CD8-positive, alpha-beta T cell (primary cell): ENCODE measurements at regions of chr1 and their contacts with region 1.

Region 1: DNA sequence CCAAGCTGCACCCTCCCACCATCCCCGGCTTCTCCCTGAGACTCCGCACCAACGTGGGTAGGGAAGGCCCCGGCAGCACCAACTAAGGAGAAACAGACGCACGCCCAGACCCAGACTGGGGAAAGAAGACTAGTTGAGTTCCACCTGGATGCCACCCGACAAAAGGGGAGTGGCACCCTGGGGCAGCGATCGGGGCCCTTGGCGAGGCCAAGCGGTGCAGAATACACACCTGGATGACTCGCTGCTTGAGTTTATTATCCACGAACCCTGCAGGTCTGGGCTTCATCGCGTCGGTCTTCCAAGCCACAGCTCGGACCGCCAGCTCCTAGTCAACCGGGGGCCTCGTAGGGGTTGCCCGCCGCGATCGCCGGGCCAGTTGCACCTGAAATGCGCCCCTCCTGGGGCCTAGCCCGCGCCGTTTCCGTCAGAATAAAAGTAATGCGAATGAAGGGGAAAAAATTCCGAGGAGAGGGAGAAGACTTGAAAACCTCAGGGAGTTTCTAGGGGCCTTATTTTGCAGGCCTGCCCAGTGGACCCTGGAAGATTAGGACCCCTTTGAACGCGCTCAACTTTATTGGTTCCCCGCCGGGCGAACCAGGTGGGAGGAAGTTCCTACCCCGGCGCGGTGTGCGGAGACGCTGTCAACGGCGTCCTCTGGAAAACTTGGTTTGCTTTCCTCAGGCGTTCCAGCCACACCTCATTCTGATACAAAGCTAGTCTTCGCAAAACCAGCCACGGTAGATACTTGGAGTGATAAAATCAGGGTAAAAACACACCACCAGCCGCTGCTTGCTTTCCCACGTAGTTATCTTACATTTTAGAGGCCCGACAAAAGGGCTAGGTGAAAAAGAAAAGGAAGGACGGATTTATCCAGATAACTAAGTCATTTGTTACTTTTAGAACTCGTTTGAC is at the start of gene NVL:
- DNase-seq: peak; percentile 62 to 91 (median 79)
- ATAC-seq: peak; percentile 89
- H3K4me3 ChIP-seq: peak within 1 kb of the TSS; percentile 99
- H3K4me3 Mint-ChIP-seq: peak within 1 kb of the TSS; percentile 94
- H3K27ac ChIP-seq: peak within 1 kb of the TSS; percentile 77 to 98
- H3K27ac Mint-ChIP-seq: peak within 1 kb of the TSS; percentile 100
- H3K4me1 ChIP-seq: peaks cover 22% of the 10 kb centered on the region
- H3K4me1 Mint-ChIP-seq: peaks cover 50% of the 10 kb centered on the region
- H3K27me3 ChIP-seq: no peaks in the 10 kb centered on the region
- H3K27me3 Mint-ChIP-seq: no peaks in the 10 kb centered on the region
- CTCF ChIP-seq: no peak
- total RNA-seq, gene NVL: 11.1 to 16.6 TPM

Region 2: GRCh38 chr1:223695941-223696340 is 634.2 kb before region 1 on chr1:
- CTCF ChIA-PET with region 1: no interaction called
- POLR2A ChIA-PET with region 1: no interaction called
- intact Hi-C with region 1: loop called (anchors 2 to 5 kb)
- DNase-seq: no peak
- ATAC-seq: no peak
- H3K4me3 ChIP-seq: no peak overlapping the region
- H3K4me3 Mint-ChIP-seq: no peak overlapping the region
- H3K27ac ChIP-seq: no peak overlapping the region
- H3K27ac Mint-ChIP-seq: no peak overlapping the region
- H3K4me1 ChIP-seq: peaks cover 7% of the 10 kb centered on the region
- H3K4me1 Mint-ChIP-seq: peaks cover 6% of the 10 kb centered on the region
- H3K27me3 ChIP-seq: no peaks in the 10 kb centered on the region
- H3K27me3 Mint-ChIP-seq: no peaks in the 10 kb centered on the region
- CTCF ChIP-seq: no peak

Region 3: GRCh38 chr1:223748773-223749733 is 581.0 kb before region 1 on chr1:
- CTCF ChIA-PET with region 1: no interaction called
- POLR2A ChIA-PET with region 1: no interaction called
- intact Hi-C with region 1: loop called in 1 of 2 experiments (anchors 1 kb)
- DNase-seq: peak; percentile 46 to 83 (median 66)
- ATAC-seq: peak; percentile 91
- H3K4me3 ChIP-seq: peak overlapping the region; percentile 55 to 58
- H3K4me3 Mint-ChIP-seq: peak overlapping the region; percentile 86
- H3K27ac ChIP-seq: peak overlapping the region in 1 of 2 experiments; percentile 36
- H3K27ac Mint-ChIP-seq: no peak overlapping the region
- H3K4me1 ChIP-seq: peaks cover 4% of the 10 kb centered on the region
- H3K4me1 Mint-ChIP-seq: no peaks in the 10 kb centered on the region
- H3K27me3 ChIP-seq: no peaks in the 10 kb centered on the region
- H3K27me3 Mint-ChIP-seq: no peaks in the 10 kb centered on the region
- CTCF ChIP-seq: peak; percentile 88

Region 4: DNA sequence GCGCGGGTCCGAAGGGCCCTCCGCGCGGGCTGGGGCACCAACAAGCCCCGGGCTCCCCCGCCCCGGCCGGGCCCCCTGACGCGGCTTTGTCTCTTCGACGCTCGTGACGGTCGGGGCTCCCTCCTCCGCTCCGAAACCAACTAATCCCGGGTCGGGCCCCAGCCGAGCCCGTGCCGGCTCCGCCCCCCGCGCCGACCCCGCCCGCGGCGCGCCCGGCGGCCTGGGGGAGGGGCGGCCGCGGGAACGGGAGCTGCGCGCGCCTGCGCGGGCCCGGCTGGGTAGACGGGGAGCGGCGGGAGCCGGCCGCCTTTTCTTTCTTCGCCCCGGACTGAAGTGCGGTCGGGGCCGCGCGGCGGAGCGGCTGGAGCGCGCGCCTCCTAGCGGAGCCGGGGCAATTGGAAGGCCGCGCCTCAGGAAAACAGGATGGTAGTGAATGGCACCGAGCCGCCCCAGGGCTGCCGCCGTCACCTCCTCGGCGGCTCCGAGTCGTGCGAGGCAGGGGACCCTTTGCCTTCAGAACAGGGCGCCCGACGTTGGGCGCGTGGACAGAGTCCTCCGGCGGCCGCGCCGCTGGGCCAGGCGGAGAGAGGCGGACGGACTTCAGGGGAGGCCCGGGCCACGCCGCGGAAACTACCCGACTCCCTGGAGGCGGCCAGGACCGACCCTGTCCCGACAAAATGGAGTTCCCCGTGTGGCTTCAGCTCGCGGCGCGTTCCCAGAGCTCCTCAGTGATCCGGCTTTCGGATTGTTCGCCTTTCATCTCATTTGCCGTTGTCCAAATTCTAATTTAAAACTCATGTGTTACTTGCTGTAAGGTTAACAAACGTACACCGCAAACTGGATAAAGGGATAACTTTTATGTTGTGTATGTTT is 484.1 kb before region 1 on chr1 and contains the start of gene TP53BP2:
- CTCF ChIA-PET with region 1: no interaction called
- POLR2A ChIA-PET with region 1: no interaction called
- intact Hi-C with region 1: loop called in 1 of 2 experiments (anchors 5 kb)
- DNase-seq: peak; percentile 66 to 93 (median 86)
- ATAC-seq: peak; percentile 83
- H3K4me3 ChIP-seq: peak within 1 kb of the TSS; percentile 77 to 87
- H3K4me3 Mint-ChIP-seq: peak within 1 kb of the TSS; percentile 93
- H3K27ac ChIP-seq: peak within 1 kb of the TSS; percentile 87 to 92
- H3K27ac Mint-ChIP-seq: peak within 1 kb of the TSS; percentile 95
- H3K4me1 ChIP-seq: peaks cover 28% of the 10 kb centered on the region
- H3K4me1 Mint-ChIP-seq: peaks cover 29% of the 10 kb centered on the region
- H3K27me3 ChIP-seq: no peaks in the 10 kb centered on the region
- H3K27me3 Mint-ChIP-seq: no peaks in the 10 kb centered on the region
- CTCF ChIP-seq: peak; percentile 33
- total RNA-seq, gene TP53BP2: 96.1 to 98.3 TPM

Region 5: GRCh38 chr1:224168859-224169380 is 161.2 kb before region 1 on chr1:
- CTCF ChIA-PET with region 1: interaction called, 6 read pairs
- POLR2A ChIA-PET with region 1: no interaction called
- intact Hi-C with region 1: loop called in 1 of 2 experiments (anchors 1 kb)
- DNase-seq: peak in 5 of 9 experiments; percentile 9 to 84 (median 25)
- ATAC-seq: peak; percentile 86
- H3K4me3 ChIP-seq: no peak overlapping the region
- H3K4me3 Mint-ChIP-seq: peak overlapping the region; percentile 33
- H3K27ac ChIP-seq: no peak overlapping the region
- H3K27ac Mint-ChIP-seq: peak overlapping the region; percentile 49
- H3K4me1 ChIP-seq: peaks cover 29% of the 10 kb centered on the region
- H3K4me1 Mint-ChIP-seq: peaks cover 31% of the 10 kb centered on the region
- H3K27me3 ChIP-seq: no peaks in the 10 kb centered on the region
- H3K27me3 Mint-ChIP-seq: no peaks in the 10 kb centered on the region
- CTCF ChIP-seq: no peak

Region 6: GRCh38 chr1:224356685-224357625 is 26.9 kb after region 1 on chr1 and contains the start of gene CNIH4:
- CTCF ChIA-PET with region 1: interaction called, 10 read pairs
- POLR2A ChIA-PET with region 1: no interaction called
- intact Hi-C with region 1: loop called (anchors 1 kb)
- DNase-seq: peak; percentile 81 to 97 (median 90)
- ATAC-seq: peak; percentile 99
- H3K4me3 ChIP-seq: peak within 1 kb of the TSS; percentile 60 to 78
- H3K4me3 Mint-ChIP-seq: peak within 1 kb of the TSS; percentile 87
- H3K27ac ChIP-seq: peak within 1 kb of the TSS; percentile 63 to 74
- H3K27ac Mint-ChIP-seq: peak within 1 kb of the TSS; percentile 92
- H3K4me1 ChIP-seq: peaks cover 33% of the 10 kb centered on the region
- H3K4me1 Mint-ChIP-seq: peaks cover 53% of the 10 kb centered on the region
- H3K27me3 ChIP-seq: no peaks in the 10 kb centered on the region
- H3K27me3 Mint-ChIP-seq: no peaks in the 10 kb centered on the region
- CTCF ChIP-seq: no peak
- total RNA-seq, gene CNIH4: 26.5 to 28.6 TPM

Region 7: GRCh38 chr1:224454397-224455066 is 124.4 kb after region 1 on chr1:
- CTCF ChIA-PET with region 1: interaction called, 10 read pairs
- POLR2A ChIA-PET with region 1: no interaction called
- intact Hi-C with region 1: loop called in 1 of 2 experiments (anchors 2 kb)
- DNase-seq: no peak
- ATAC-seq: no peak
- H3K4me3 ChIP-seq: no peak overlapping the region
- H3K4me3 Mint-ChIP-seq: no peak overlapping the region
- H3K27ac ChIP-seq: no peak overlapping the region
- H3K27ac Mint-ChIP-seq: no peak overlapping the region
- H3K4me1 ChIP-seq: peaks cover 7% of the 10 kb centered on the region
- H3K4me1 Mint-ChIP-seq: peaks cover 16% of the 10 kb centered on the region
- H3K27me3 ChIP-seq: no peaks in the 10 kb centered on the region
- H3K27me3 Mint-ChIP-seq: no peaks in the 10 kb centered on the region
- CTCF ChIP-seq: no peak

Region 8: GRCh38 chr1:224592636-224593582 is 262.8 kb after region 1 on chr1:
- CTCF ChIA-PET with region 1: no interaction called
- POLR2A ChIA-PET with region 1: no interaction called
- intact Hi-C with region 1: no loop called
- DNase-seq: no peak
- ATAC-seq: no peak
- H3K4me3 ChIP-seq: no peak overlapping the region
- H3K4me3 Mint-ChIP-seq: no peak overlapping the region
- H3K27ac ChIP-seq: no peak overlapping the region
- H3K27ac Mint-ChIP-seq: no peak overlapping the region
- H3K4me1 ChIP-seq: no peaks in the 10 kb centered on the region
- H3K4me1 Mint-ChIP-seq: no peaks in the 10 kb centered on the region
- H3K27me3 ChIP-seq: no peaks in the 10 kb centered on the region
- H3K27me3 Mint-ChIP-seq: no peaks in the 10 kb centered on the region
- CTCF ChIP-seq: no peak

Region 9: DNA sequence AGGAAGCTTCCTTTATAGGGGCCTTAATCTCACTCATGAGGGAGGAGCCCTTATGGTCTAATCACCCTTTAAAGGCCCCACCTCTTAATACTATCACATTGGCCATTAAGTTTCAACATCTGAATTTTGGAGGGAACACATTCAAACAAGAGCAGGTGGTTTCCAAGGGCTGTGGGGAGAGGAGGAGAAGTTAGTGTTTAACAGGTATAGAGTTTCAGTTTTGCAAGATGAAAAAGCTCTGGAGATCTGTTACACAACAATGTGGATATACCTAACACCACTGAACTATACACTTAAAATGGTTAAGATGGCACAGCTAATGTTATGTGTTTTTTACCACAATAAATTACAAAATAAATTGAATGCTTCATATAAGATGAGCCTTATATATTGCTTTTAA is 486.0 kb after region 1 on chr1:
- CTCF ChIA-PET with region 1: no interaction called
- POLR2A ChIA-PET with region 1: no interaction called
- intact Hi-C with region 1: no loop called
- DNase-seq: no peak
- ATAC-seq: no peak
- H3K4me3 ChIP-seq: no peak overlapping the region
- H3K4me3 Mint-ChIP-seq: no peak overlapping the region
- H3K27ac ChIP-seq: no peak overlapping the region
- H3K27ac Mint-ChIP-seq: no peak overlapping the region
- H3K4me1 ChIP-seq: no peaks in the 10 kb centered on the region
- H3K4me1 Mint-ChIP-seq: no peaks in the 10 kb centered on the region
- H3K27me3 ChIP-seq: no peaks in the 10 kb centered on the region
- H3K27me3 Mint-ChIP-seq: peaks cover 11% of the 10 kb centered on the region
- CTCF ChIP-seq: no peak